IMR-90 (cell line): ENCODE measurements at regions of chr9 and their contacts with region 1.

Region 1: DNA sequence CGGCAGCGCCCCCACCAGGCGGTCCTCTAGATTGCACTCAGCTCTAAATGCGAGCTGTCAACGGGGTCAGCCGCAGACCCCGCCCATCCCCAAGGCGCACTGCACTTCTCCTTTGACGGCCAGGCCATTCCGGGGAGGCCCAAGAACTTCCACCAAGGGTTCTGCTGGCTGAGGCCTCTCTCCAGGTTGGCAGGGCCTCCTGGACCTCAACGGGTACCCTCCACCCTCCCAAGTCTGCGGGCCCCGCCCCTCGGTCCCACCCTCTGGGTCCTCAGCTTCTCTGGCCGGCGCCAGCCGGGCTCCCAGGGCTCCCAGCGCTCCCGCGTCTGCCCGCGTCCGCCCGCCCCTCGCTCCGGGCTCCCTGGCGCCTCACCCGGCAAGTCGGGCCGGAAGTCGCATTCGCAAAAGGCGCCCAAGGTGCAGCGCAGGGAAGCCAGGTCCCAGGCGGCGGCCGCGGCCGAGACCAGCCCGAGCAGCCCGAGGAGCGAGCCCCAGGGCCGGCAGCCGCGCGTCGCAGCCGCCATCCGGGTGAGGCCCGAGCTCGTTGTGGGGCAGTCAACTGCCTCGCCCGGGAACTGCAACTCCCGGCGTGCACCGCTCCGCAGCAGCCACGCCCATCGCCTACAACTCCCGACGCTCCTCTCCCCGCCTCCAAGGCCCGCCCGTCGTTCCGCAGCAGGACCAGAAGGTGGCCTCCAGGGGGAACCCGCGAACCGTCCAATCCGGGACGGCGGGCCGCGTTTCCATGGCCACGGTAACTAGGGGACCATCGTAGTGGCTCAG is at the start of gene TOR2A:
- DNase-seq: peak; percentile 95
- ATAC-seq: peak; percentile 96
- H3K4me3 ChIP-seq: peak within 1 kb of the TSS; percentile 60
- H3K27ac ChIP-seq: peak within 1 kb of the TSS; percentile 74
- H3K4me1 ChIP-seq: peaks cover 6% of the 10 kb centered on the region
- H3K27me3 ChIP-seq: 0 out of 2 replicates have a peak, but pooled peaks cover 3% of the 10 kb centered on the region
- CTCF ChIP-seq: peak; percentile 99
- POLR2A ChIP-seq: peak; percentile 73
- RAD21 ChIP-seq: peak; percentile 93
- total RNA-seq, gene TOR2A: 0.90 and 1.1 TPM in 2 replicates

Region 2: GRCh38 chr9:127503947-127504782 is 230.8 kb before region 1 on chr9:
- CTCF ChIA-PET with region 1: no interaction called
- POLR2A ChIA-PET with region 1: no interaction called
- dilution Hi-C with region 1: no loop called
- in situ Hi-C with region 1: no loop called
- intact Hi-C with region 1: loop called (anchors 5 kb)
- DNase-seq: peak; percentile 82
- ATAC-seq: peak; percentile 72
- H3K4me3 ChIP-seq: no peak overlapping the region
- H3K27ac ChIP-seq: peak overlapping the region; percentile 47
- H3K4me1 ChIP-seq: peaks cover 7% of the 10 kb centered on the region; the same call in 1 of the 2 replicates
- H3K27me3 ChIP-seq: no peaks in the 10 kb centered on the region
- CTCF ChIP-seq: peak; percentile 85
- POLR2A ChIP-seq: 0 out of 2 replicates have a peak, but pooled peaks have one; percentile 47
- RAD21 ChIP-seq: peak; percentile 86

Region 3: GRCh38 chr9:127611899-127612790 is 122.8 kb before region 1 on chr9 and contains the start of gene STXBP1:
- CTCF ChIA-PET with region 1: interaction called, 13 read pairs
- POLR2A ChIA-PET with region 1: no interaction called
- dilution Hi-C with region 1: no loop called
- in situ Hi-C with region 1: no loop called
- intact Hi-C with region 1: loop called (anchors 1 kb)
- DNase-seq: peak; percentile 76
- ATAC-seq: peak; percentile 86
- H3K4me3 ChIP-seq: peak within 1 kb of the TSS; percentile 97
- H3K27ac ChIP-seq: peak within 1 kb of the TSS; percentile 76
- H3K4me1 ChIP-seq: peaks cover 8% of the 10 kb centered on the region
- H3K27me3 ChIP-seq: no peaks in the 10 kb centered on the region
- CTCF ChIP-seq: peak; percentile 32; the same call in 1 of the 2 replicates
- POLR2A ChIP-seq: peak; percentile 76
- RAD21 ChIP-seq: no peak
- total RNA-seq, gene STXBP1: 15.8 and 18.9 TPM in 2 replicates

Region 4: DNA sequence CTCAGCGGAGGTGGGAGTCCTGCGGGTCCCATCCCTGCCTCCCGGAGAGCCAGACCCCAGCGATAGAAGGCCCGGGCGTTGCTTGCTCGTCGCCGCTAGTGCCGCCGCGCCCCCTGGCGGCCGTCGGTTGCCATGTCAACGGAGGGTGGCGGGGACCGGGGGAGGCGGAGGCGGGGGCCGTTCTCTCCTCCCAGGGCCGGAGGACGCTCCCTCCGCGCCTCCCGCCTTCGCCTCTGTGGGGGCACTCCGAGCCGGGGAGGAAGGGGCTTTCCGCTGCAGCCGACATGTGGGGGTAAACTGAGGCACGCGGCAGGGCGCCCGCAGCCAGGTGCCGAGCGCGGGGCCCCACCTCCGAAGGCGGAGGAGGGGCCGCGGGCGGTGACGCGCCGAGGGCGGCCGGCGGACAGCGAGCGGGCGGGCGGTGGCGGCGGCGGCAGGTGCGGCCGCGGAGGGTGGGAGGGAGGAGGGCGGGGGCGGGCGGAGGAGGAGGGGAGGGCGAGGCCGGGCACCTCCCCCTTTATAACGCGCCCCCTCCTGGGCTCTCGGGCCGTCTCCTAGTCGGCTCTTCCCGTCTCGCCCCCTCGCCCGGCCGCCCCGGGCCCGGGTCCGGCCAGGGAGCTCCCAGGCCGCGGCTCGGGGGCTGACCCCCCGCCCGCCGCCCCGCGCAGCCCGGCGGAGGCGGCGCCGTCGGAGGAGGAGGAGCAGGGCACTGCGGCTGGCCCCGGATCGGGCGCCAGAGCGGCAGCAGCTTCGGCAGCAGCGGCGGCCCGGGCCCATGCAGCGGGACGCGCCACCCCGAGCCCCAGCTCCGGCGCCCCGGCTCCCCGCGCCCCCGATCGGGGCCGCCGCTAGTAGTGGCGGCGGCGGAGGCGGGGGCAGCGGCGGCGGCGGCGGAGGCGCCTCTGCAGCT is 50.3 kb after region 1 on chr9:
- CTCF ChIA-PET with region 1: interaction called, 8 read pairs
- POLR2A ChIA-PET with region 1: no interaction called
- dilution Hi-C with region 1: no loop called
- in situ Hi-C with region 1: loop called (anchors 5 kb)
- intact Hi-C with region 1: loop called (anchors 1 kb)
- DNase-seq: peak; percentile 64
- ATAC-seq: peak; percentile 70
- H3K4me3 ChIP-seq: peak overlapping the region; percentile 95
- H3K27ac ChIP-seq: peak overlapping the region; percentile 48; the same call in 1 of the 2 replicates
- H3K4me1 ChIP-seq: no peaks in the 10 kb centered on the region; the same call in 1 of the 2 replicates
- H3K27me3 ChIP-seq: no peaks in the 10 kb centered on the region
- CTCF ChIP-seq: peak; percentile 77
- POLR2A ChIP-seq: no peak; the same call in 1 of the 2 replicates
- RAD21 ChIP-seq: peak; percentile 76

Region 5: GRCh38 chr9:127869310-127870152 is 134.6 kb after region 1 on chr9:
- CTCF ChIA-PET with region 1: interaction called, 6 read pairs
- POLR2A ChIA-PET with region 1: interaction called, 3 read pairs
- dilution Hi-C with region 1: no loop called
- in situ Hi-C with region 1: no loop called
- intact Hi-C with region 1: loop called (anchors 2 kb)
- DNase-seq: peak; percentile 67
- ATAC-seq: peak; percentile 96
- H3K4me3 ChIP-seq: no peak overlapping the region
- H3K27ac ChIP-seq: no peak overlapping the region
- H3K4me1 ChIP-seq: no peaks in the 10 kb centered on the region
- H3K27me3 ChIP-seq: no peaks in the 10 kb centered on the region
- CTCF ChIP-seq: peak; percentile 97
- POLR2A ChIP-seq: 0 out of 2 replicates have a peak, but pooled peaks have one; percentile 50
- RAD21 ChIP-seq: peak; percentile 97